ENCODE measurements at regions of chr4 and their contacts with region 1.

Region 1: DNA sequence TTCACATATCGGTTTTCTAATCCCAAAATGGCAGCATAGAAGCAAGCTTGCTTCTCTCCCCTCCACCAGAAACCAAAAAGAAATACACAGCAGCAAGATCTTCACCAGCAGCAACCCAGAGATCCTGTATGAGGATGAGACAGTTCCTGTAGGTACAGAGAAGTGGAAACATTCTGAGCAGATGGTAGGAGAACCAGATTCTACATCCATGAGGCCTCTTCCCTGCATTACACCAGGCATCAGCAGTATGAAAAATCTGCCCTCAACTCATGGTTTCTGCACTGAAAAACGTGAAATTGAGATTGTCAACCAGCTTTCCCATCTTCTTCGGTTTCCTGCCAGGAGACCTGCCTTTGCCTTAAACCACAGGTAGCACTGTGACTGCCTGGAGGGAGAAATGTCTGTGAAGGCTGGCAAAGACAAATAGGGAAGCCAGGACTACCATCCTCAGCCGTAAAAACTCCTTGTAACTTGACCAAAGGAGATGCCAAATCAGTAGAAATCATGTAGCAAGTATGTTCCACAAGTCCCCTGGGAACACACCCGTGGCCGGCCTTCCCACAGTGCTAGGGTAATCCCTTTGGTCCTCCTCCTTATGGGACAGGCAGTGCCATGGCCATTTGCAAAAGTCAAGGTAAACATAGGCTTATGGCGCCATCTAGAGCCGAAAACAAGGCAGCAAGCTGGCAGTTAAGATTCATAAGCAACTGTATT is 24.0 kb upstream of the MTHFD2L start:
- H3K4me3 Mint-ChIP-seq: no peak overlapping the region
- H3K27ac Mint-ChIP-seq: no peak overlapping the region
- H3K4me1 Mint-ChIP-seq: no peaks in the 10 kb centered on the region
- H3K27me3 Mint-ChIP-seq: peaks cover 1% of the 10 kb centered on the region

Region 2: DNA sequence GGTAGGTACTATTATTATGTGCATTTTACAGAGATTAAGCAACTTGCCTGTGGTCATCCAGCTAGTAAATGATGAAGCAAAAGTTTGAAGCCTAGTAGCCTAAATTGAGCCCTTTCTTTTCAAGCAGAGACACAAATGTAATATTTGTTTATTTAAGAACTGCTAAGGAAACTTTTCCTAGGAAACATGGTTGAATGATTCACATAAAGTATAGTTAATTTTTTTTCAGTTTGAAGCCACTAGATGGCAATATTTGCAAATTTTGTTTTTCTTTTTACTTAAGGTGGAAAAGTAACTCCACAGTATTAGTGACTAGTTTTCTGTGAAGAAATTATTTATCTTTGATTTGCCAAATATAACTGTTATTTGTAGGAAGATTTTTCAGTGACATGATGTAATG is 822.5 kb before region 1 on chr4:
- intact Hi-C with region 1: loop called (anchors 10 kb)
- H3K4me3 Mint-ChIP-seq: no peak overlapping the region
- H3K27ac Mint-ChIP-seq: no peak overlapping the region
- H3K4me1 Mint-ChIP-seq: peaks cover 12% of the 10 kb centered on the region
- H3K27me3 Mint-ChIP-seq: no peaks in the 10 kb centered on the region

Region 3: GRCh38 chr4:73573794-73574406 is 560.0 kb before region 1 on chr4:
- intact Hi-C with region 1: loop called (anchors 5 kb)
- H3K4me3 Mint-ChIP-seq: no peak overlapping the region
- H3K27ac Mint-ChIP-seq: no peak overlapping the region
- H3K4me1 Mint-ChIP-seq: peaks cover 8% of the 10 kb centered on the region
- H3K27me3 Mint-ChIP-seq: peaks cover 15% of the 10 kb centered on the region

Region 4: GRCh38 chr4:73593631-73594241 is 540.2 kb before region 1 on chr4:
- intact Hi-C with region 1: loop called (anchors 5 kb)
- H3K4me3 Mint-ChIP-seq: no peak overlapping the region
- H3K27ac Mint-ChIP-seq: no peak overlapping the region
- H3K4me1 Mint-ChIP-seq: peaks cover 20% of the 10 kb centered on the region
- H3K27me3 Mint-ChIP-seq: peaks cover 42% of the 10 kb centered on the region

Measured in dendritic cell treated with granulocyte-macrophage colony-stimulating factor and Interleukin-4, amounts not matched to agents 40 ng/mL and 50 ng/mL, for 4 days (primary cell).